T-cell (primary cell): ENCODE measurements at regions of chr17 and their contacts with region 1.

Region 1: DNA sequence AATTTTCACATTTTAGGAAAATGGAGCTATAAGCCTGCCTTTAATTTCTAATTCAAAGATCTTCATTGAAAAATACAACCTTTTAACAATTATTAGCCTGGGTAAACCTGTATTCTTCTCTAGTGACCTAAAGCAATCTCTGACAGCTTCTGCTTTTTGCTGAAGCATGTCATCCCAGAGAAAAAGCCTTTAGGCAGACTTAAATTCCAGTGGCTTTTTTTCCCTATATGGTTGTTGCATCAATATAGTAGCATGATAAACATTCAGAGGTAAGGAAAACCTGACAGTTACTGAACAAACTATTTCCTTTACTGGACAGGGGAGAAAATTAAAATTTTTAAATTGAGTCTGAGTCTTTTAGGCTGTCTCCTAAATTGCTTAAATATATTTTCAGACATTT is 7.8 kb upstream of the EVI2A start:
- DNase-seq: no peak
- ATAC-seq: no peak
- H3K4me3 ChIP-seq: no peak overlapping the region
- H3K4me3 Mint-ChIP-seq: no peak overlapping the region
- H3K27ac ChIP-seq: no peak overlapping the region
- H3K27ac Mint-ChIP-seq: no peak overlapping the region
- H3K4me1 ChIP-seq: no peaks in the 10 kb centered on the region
- H3K4me1 Mint-ChIP-seq: peaks cover 0 to 8% (median 4%) of the 10 kb centered on the region in 3 donors
- H3K27me3 ChIP-seq: no peaks in the 10 kb centered on the region
- H3K27me3 Mint-ChIP-seq: no peaks in the 10 kb centered on the region

Region 2: DNA sequence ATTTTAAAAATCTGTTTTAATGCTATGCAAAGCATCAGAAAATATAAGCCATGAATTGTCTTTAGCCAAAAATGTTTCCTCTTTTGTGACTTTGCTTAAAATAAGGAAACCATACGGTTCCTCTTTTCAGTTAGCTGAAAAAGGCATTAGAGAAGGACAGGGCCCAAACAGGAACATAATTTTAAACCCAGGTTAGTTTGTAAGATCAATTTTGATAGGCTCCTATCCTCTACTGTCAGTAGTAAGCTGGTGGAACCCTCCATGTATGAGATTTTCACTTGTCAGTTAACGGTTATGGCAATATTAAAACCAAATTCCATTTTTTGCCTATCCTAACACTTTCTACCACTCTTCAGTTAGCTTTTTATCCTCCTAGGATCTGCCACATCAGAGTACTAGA is 19.7 kb before region 1 on chr17:
- CTCF ChIA-PET with region 1: interaction called in 1 of 2 experiments, 16 read pairs
- POLR2A ChIA-PET with region 1: interaction called in 1 of 2 experiments, 4 read pairs
- DNase-seq: peak in 1 of 35 experiments; percentile 60
- ATAC-seq: peak in 1 of 4 experiments; percentile 21
- H3K4me3 ChIP-seq: peak overlapping the region; percentile 67 to 75
- H3K4me3 Mint-ChIP-seq: peak overlapping the region; percentile 77 to 94 (median 88)
- H3K27ac ChIP-seq: peak overlapping the region; percentile 90
- H3K27ac Mint-ChIP-seq: peak overlapping the region; percentile 93 to 94
- H3K4me1 ChIP-seq: peaks cover 19 to 37% of the 10 kb centered on the region in 2 experiments
- H3K4me1 Mint-ChIP-seq: peaks cover 57 to 72% (median 61%) of the 10 kb centered on the region in 3 donors
- H3K27me3 ChIP-seq: no peaks in the 10 kb centered on the region
- H3K27me3 Mint-ChIP-seq: no peaks in the 10 kb centered on the region